ENCODE measurements at regions of chr9 and their contacts with region 1.

Region 1: GRCh38 chr9:33473643-33474352 is at the start of gene NOL6:
- DNase-seq: peak; percentile 98
- ATAC-seq: peak; percentile 100
- H3K4me3 ChIP-seq: peak within 1 kb of the TSS; percentile 86 to 96 (median 93)
- H3K27ac ChIP-seq: peak within 1 kb of the TSS; percentile 55
- H3K4me1 ChIP-seq: peaks cover 17% of the 10 kb centered on the region
- H3K27me3 ChIP-seq: no peaks in the 10 kb centered on the region; a peak in 1 of 5 replicates
- CTCF ChIP-seq: no peak
- EP300 ChIP-seq: no peak
- POLR2A ChIP-seq: peak; percentile 74 to 85
- RAD21 ChIP-seq: no peak
- total RNA-seq, gene NOL6: 28.6 and 30.2 TPM in 2 replicates

Region 2: DNA sequence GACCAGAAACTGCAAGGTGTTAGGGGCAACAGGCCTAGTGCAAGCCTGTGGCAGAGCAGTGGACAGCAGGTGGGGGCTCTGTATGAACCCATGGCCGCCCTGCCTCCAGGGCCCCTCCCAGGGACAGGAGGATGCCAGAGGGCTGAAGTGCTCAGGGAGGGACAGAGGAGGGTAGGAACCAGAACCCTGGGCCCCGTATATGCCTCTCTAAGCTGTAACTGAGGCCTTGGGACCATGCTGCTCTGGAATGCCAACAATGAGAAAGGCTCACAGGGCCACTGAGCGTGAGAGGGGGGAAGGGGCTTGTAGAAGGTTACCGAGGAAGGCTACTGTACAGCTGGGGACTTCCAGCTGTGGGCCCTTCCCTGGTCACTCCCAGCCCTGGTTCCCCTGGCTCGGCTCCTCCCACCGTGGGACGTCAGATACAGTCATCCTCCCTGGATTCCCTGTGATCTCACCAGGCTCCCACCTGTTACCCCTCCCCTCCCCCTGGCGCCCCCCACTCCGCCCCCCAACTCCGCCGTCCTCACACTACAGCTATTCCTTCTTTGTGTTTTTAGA is 92.5 kb before region 1 on chr9:
- CTCF ChIA-PET with region 1: no interaction called
- POLR2A ChIA-PET with region 1: interaction called, 10 read pairs
- in situ Hi-C with region 1: loop called (anchors 10 kb)
- intact Hi-C with region 1: no loop called
- DNase-seq: peak; percentile 57
- ATAC-seq: peak; percentile 82
- H3K4me3 ChIP-seq: peak overlapping the region in 1 of 3 experiments; percentile 52; a peak in 1 of 6 replicates
- H3K27ac ChIP-seq: no peak overlapping the region
- H3K4me1 ChIP-seq: peaks cover 36% of the 10 kb centered on the region
- H3K27me3 ChIP-seq: no peaks in the 10 kb centered on the region
- CTCF ChIP-seq: no peak
- EP300 ChIP-seq: no peak
- POLR2A ChIP-seq: no peak
- RAD21 ChIP-seq: no peak

Region 3: GRCh38 chr9:33452828-33453271 is 20.9 kb before region 1 on chr9:
- CTCF ChIA-PET with region 1: no interaction called
- POLR2A ChIA-PET with region 1: interaction called, 10 read pairs
- in situ Hi-C with region 1: no loop called
- intact Hi-C with region 1: no loop called
- DNase-seq: peak; percentile 73
- ATAC-seq: peak; percentile 89
- H3K4me3 ChIP-seq: no peak overlapping the region; a peak in 1 of 6 replicates
- H3K27ac ChIP-seq: no peak overlapping the region
- H3K4me1 ChIP-seq: peaks cover 33% of the 10 kb centered on the region
- H3K27me3 ChIP-seq: peaks cover 1 to 19% of the 10 kb centered on the region in 2 experiments; a peak in 4 of 5 replicates
- CTCF ChIP-seq: peak; percentile 93
- EP300 ChIP-seq: no peak
- POLR2A ChIP-seq: no peak
- RAD21 ChIP-seq: peak; percentile 80

Region 4: DNA sequence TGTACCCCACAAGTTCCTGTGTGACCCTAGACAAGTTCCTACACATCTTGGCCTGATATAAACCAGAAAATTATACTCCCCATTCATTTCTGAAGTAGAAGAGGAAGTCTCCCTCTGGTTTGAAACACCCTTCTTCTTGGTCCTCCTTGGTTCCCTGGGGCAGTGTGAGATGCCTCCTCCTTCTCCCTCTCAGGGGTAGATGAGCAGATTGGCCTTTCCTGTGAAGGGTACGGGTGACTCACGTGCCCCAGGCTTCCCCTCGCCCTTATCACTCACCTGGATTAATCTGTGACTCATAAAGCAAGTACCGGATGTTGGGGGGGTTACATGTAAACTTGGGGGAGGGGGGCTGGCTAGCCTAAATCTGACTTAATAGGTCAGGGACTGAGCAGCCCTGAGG is 15.4 kb before region 1 on chr9:
- CTCF ChIA-PET with region 1: no interaction called
- POLR2A ChIA-PET with region 1: interaction called, 17 read pairs
- in situ Hi-C with region 1: no loop called
- intact Hi-C with region 1: no loop called
- DNase-seq: peak; percentile 20
- ATAC-seq: no peak
- H3K4me3 ChIP-seq: no peak overlapping the region
- H3K27ac ChIP-seq: no peak overlapping the region
- H3K4me1 ChIP-seq: peaks cover 23% of the 10 kb centered on the region
- H3K27me3 ChIP-seq: no peaks in the 10 kb centered on the region
- CTCF ChIP-seq: no peak
- EP300 ChIP-seq: no peak
- POLR2A ChIP-seq: no peak
- RAD21 ChIP-seq: no peak

Region 5: GRCh38 chr9:34328987-34329832 is 855.4 kb after region 1 on chr9 and contains the starts of genes KIF24 and NUDT2:
- CTCF ChIA-PET with region 1: no interaction called
- POLR2A ChIA-PET with region 1: no interaction called
- in situ Hi-C with region 1: no loop called
- intact Hi-C with region 1: no loop called
- DNase-seq: peak; percentile 100
- ATAC-seq: peak; percentile 96
- H3K4me3 ChIP-seq: peak within 1 kb of the TSS; percentile 83 to 94 (median 89)
- H3K27ac ChIP-seq: peak within 1 kb of the TSS; percentile 89
- H3K4me1 ChIP-seq: peaks cover 50% of the 10 kb centered on the region
- H3K27me3 ChIP-seq: no peaks in the 10 kb centered on the region; a peak in 1 of 5 replicates
- CTCF ChIP-seq: 0 out of 2 replicates have a peak, but pooled peaks have one; percentile 11
- EP300 ChIP-seq: no peak
- POLR2A ChIP-seq: peak; percentile 88 to 94
- RAD21 ChIP-seq: no peak
- total RNA-seq, gene KIF24: 2.8 and 3.0 TPM in 2 replicates
- total RNA-seq, gene NUDT2: 19.9 and 28.0 TPM in 2 replicates

Region 6: GRCh38 chr9:34463098-34463900 is 989.5 kb after region 1 on chr9:
- CTCF ChIA-PET with region 1: no interaction called
- POLR2A ChIA-PET with region 1: no interaction called
- in situ Hi-C with region 1: no loop called
- intact Hi-C with region 1: no loop called
- DNase-seq: no peak
- ATAC-seq: no peak
- H3K4me3 ChIP-seq: no peak overlapping the region
- H3K27ac ChIP-seq: no peak overlapping the region
- H3K4me1 ChIP-seq: peaks cover 7% of the 10 kb centered on the region
- H3K27me3 ChIP-seq: no peaks in the 10 kb centered on the region
- CTCF ChIP-seq: no peak
- EP300 ChIP-seq: no peak
- POLR2A ChIP-seq: no peak
- RAD21 ChIP-seq: no peak